BJ (cell line): ENCODE measurements at regions of chr5 and their contacts with region 1.

Region 1: GRCh38 chr5:73448463-73449136 is at the start of gene FOXD1:
- DNase-seq: peak; percentile 65
- H3K4me3 ChIP-seq: peak within 1 kb of the TSS; percentile 80
- H3K27me3 ChIP-seq: peaks cover 5% of the 10 kb centered on the region
- CTCF ChIP-seq: peak; percentile 11; the same call in 1 of the 2 replicates
- polyA plus RNA-seq, gene FOXD1: 4.3 and 4.9 TPM in 2 replicates

Region 2: GRCh38 chr5:73093943-73094342 is 354.7 kb before region 1 on chr5:
- CTCF ChIA-PET with region 1: interaction called, 10 read pairs
- POLR2A ChIA-PET with region 1: no interaction called
- DNase-seq: peak; percentile 21
- H3K4me3 ChIP-seq: no peak overlapping the region
- H3K27me3 ChIP-seq: no peaks in the 10 kb centered on the region
- CTCF ChIP-seq: no peak

Region 3: GRCh38 chr5:73229209-73229661 is 219.4 kb before region 1 on chr5:
- CTCF ChIA-PET with region 1: interaction called, 17 read pairs
- POLR2A ChIA-PET with region 1: no interaction called
- DNase-seq: peak; percentile 59
- H3K4me3 ChIP-seq: no peak overlapping the region
- H3K27me3 ChIP-seq: no peaks in the 10 kb centered on the region
- CTCF ChIP-seq: no peak

Region 4: GRCh38 chr5:73365301-73365853 is 83.2 kb before region 1 on chr5:
- CTCF ChIA-PET with region 1: interaction called, 10 read pairs
- POLR2A ChIA-PET with region 1: no interaction called
- DNase-seq: peak; percentile 76
- H3K4me3 ChIP-seq: no peak overlapping the region
- H3K27me3 ChIP-seq: no peaks in the 10 kb centered on the region
- CTCF ChIP-seq: no peak

Region 5: DNA sequence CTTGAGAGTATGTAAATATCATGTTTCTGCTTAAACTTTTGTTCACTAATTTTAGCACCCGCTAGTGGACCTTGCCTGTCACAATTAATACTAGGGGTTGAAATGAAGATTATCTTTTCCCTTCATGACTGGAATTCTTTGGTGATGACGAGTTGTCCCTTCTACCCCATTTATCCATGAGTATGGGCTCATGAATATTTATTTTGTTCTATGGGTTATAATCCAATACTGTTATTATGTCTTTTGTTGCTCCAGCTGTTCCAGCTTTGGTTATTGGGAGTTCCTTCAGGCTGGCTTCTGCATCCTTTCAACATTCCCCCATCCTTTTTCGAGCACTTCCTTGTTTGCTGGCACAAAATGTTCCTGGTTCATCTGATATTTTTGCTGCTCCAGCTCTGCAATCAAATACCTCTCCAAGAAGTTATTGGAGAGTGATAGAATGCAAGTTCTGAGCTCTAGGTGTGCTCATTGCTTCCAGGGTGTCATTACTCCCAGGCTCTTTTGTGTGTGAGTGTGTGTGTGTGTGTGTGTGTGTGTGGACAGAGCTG is 157.7 kb after region 1 on chr5:
- CTCF ChIA-PET with region 1: no interaction called
- POLR2A ChIA-PET with region 1: no interaction called
- DNase-seq: no peak
- H3K4me3 ChIP-seq: no peak overlapping the region
- H3K27me3 ChIP-seq: no peaks in the 10 kb centered on the region
- CTCF ChIP-seq: no peak